ENCODE measurements at regions of chr15 and their contacts with region 1.

Region 1: DNA sequence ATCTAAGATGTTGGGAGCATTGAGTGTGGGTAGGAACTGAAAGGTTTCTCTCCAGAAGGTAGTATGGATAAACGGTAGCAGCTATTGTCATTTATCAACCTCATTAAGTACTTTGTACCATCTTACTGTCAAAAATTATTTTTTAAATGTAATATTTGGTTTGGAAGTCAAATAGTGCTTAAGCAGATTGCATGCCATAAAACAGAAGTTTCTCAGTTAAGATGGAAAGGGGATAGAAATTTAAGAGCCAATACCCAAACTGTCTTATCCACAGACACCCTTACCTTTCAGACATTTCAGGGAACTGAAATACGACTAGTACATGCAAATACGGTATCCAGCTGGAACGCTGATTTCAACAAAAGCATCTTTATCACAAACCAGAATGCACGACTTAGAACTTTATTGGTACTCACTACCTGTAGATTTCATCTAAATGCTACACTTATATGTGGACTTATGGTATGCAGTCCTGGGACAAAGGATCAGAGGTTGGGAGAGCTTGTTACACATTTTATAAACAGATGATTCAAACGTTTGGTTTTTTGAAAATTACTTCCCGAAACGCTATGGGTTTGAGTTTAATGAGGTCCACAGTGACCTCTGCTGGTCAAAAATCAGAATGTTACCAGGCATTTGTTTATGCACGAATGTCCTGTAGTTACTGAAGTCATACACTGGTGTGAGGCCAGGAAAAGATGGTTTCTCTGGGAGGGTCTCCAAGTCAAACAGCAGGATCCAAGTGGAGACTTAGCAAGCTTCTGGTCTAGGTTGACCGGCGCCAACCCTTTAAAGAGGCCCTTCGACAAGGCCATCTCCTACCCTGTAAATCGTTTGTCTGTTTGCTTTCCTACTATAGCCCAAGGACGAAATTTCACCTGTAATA is 45.7 kb upstream of the DUT start:
- DNase-seq: peak; percentile 90
- H3K4me3 ChIP-seq: peak overlapping the region in 1 of 3 experiments; percentile 55
- H3K27ac ChIP-seq: no peak overlapping the region
- H3K4me1 ChIP-seq: peaks cover 3% of the 10 kb centered on the region
- H3K27me3 ChIP-seq: peaks cover 4 to 8% of the 10 kb centered on the region in 2 experiments
- CTCF ChIP-seq: peak; percentile 41 to 70
- POLR2A ChIP-seq: no peak

Region 2: GRCh38 chr15:46312133-46312740 is 1973.3 kb before region 1 on chr15:
- CTCF ChIA-PET with region 1: interaction called, 3 read pairs
- POLR2A ChIA-PET with region 1: no interaction called
- dilution Hi-C with region 1: no loop called
- intact Hi-C with region 1: loop called (anchors 5 kb)
- DNase-seq: peak; percentile 71
- H3K4me3 ChIP-seq: no peak overlapping the region
- H3K27ac ChIP-seq: no peak overlapping the region
- H3K4me1 ChIP-seq: no peaks in the 10 kb centered on the region
- H3K27me3 ChIP-seq: peaks cover 0 to 3% of the 10 kb centered on the region in 2 experiments
- CTCF ChIP-seq: peak; percentile 82 to 86
- POLR2A ChIP-seq: no peak

Region 3: DNA sequence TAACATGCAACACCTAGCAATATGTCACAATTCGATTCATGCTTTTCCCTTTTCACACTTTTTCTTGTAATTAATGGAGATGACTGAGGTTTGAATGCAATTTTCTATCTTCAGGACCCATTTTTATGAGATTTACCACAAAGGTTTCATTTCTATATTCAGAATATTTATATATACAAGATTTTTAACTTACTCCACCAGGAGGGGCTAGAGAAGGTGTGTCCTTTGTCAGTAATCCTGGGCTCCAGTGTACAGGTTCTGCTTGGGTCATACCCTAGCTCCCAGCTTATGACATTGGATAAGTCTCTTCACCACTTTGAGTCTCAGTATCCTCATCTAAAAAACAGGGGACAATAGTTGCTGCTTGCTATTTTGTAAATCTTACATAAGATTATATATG is 260.5 kb before region 1 on chr15:
- CTCF ChIA-PET with region 1: interaction called, 10 read pairs
- POLR2A ChIA-PET with region 1: no interaction called
- dilution Hi-C with region 1: no loop called
- intact Hi-C with region 1: loop called (anchors 1 kb)
- DNase-seq: peak; percentile 2
- H3K4me3 ChIP-seq: no peak overlapping the region
- H3K27ac ChIP-seq: no peak overlapping the region
- H3K4me1 ChIP-seq: no peaks in the 10 kb centered on the region
- H3K27me3 ChIP-seq: peaks cover 0 to 4% of the 10 kb centered on the region in 2 experiments
- CTCF ChIP-seq: no peak
- POLR2A ChIP-seq: no peak

Region 4: GRCh38 chr15:48084759-48085590 is 200.6 kb before region 1 on chr15:
- CTCF ChIA-PET with region 1: interaction called, 16 read pairs
- POLR2A ChIA-PET with region 1: no interaction called
- dilution Hi-C with region 1: no loop called
- intact Hi-C with region 1: no loop called
- DNase-seq: peak; percentile 18
- H3K4me3 ChIP-seq: no peak overlapping the region
- H3K27ac ChIP-seq: no peak overlapping the region
- H3K4me1 ChIP-seq: no peaks in the 10 kb centered on the region
- H3K27me3 ChIP-seq: no peaks in the 10 kb centered on the region
- CTCF ChIP-seq: peak; percentile 29 to 47
- POLR2A ChIP-seq: no peak

Region 5: DNA sequence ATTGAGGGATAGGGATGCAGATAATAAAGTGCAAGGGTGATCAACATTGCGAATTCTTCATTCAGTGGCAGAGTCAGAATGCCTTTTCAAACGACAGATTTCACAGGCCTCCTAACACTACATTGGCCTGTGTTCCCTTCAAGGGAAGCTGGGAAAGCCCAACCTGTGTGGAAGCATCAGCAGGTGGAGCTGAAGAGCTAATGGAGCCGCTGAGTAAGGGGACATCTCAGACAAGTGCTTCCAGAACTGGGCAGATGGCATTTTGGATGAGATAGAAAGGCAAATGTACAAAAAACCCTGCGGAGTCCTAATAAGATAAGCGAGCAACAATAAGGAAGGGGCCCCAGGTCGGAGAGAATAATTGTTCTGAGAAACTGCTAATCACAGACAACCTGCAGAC is 173.3 kb before region 1 on chr15:
- CTCF ChIA-PET with region 1: interaction called, 45 read pairs
- POLR2A ChIA-PET with region 1: no interaction called
- dilution Hi-C with region 1: no loop called
- intact Hi-C with region 1: loop called (anchors 1 kb)
- DNase-seq: peak; percentile 49
- H3K4me3 ChIP-seq: no peak overlapping the region
- H3K27ac ChIP-seq: no peak overlapping the region
- H3K4me1 ChIP-seq: no peaks in the 10 kb centered on the region
- H3K27me3 ChIP-seq: peaks cover 2 to 3% of the 10 kb centered on the region in 2 experiments
- CTCF ChIP-seq: peak; percentile 27 to 60
- POLR2A ChIP-seq: no peak

Region 6: GRCh38 chr15:48267766-48268165 is 17.8 kb before region 1 on chr15:
- CTCF ChIA-PET with region 1: interaction called, 25 read pairs
- POLR2A ChIA-PET with region 1: no interaction called
- dilution Hi-C with region 1: no loop called
- intact Hi-C with region 1: no loop called
- DNase-seq: no peak
- H3K4me3 ChIP-seq: no peak overlapping the region
- H3K27ac ChIP-seq: no peak overlapping the region
- H3K4me1 ChIP-seq: no peaks in the 10 kb centered on the region
- H3K27me3 ChIP-seq: peaks cover 1 to 10% of the 10 kb centered on the region in 2 experiments
- CTCF ChIP-seq: no peak
- POLR2A ChIP-seq: no peak

Region 7: GRCh38 chr15:48297668-48298067 is 12.1 kb after region 1 on chr15:
- CTCF ChIA-PET with region 1: interaction called, 14 read pairs
- POLR2A ChIA-PET with region 1: no interaction called
- dilution Hi-C with region 1: no loop called
- intact Hi-C with region 1: no loop called
- DNase-seq: no peak
- H3K4me3 ChIP-seq: no peak overlapping the region
- H3K27ac ChIP-seq: no peak overlapping the region
- H3K4me1 ChIP-seq: no peaks in the 10 kb centered on the region
- H3K27me3 ChIP-seq: peaks cover 0 to 1% of the 10 kb centered on the region in 2 experiments
- CTCF ChIP-seq: no peak
- POLR2A ChIP-seq: no peak

Region 8: DNA sequence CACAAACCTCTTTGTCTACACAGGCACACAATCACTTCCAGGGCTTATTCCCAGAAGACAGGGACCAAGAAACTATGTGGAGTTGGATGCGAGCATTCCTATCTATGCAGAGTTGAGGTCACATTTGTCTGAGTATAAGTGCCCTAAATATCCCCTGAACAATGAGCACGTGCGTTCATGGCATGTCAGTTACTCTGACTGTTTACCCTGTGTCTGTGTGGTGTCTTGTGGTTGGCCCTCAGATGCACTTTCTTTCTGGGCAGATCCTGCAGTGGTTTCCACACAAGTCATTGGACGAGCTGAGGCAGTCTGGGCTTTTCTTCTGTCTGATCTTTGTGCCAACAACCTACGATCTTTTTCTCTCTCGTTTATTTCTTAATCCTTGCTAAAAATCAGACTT is 225.4 kb after region 1 on chr15:
- CTCF ChIA-PET with region 1: no interaction called
- POLR2A ChIA-PET with region 1: no interaction called
- dilution Hi-C with region 1: no loop called
- intact Hi-C with region 1: no loop called
- DNase-seq: no peak
- H3K4me3 ChIP-seq: no peak overlapping the region
- H3K27ac ChIP-seq: no peak overlapping the region
- H3K4me1 ChIP-seq: peaks cover 3% of the 10 kb centered on the region
- H3K27me3 ChIP-seq: no peaks in the 10 kb centered on the region
- CTCF ChIP-seq: no peak
- POLR2A ChIP-seq: no peak

Region 9: DNA sequence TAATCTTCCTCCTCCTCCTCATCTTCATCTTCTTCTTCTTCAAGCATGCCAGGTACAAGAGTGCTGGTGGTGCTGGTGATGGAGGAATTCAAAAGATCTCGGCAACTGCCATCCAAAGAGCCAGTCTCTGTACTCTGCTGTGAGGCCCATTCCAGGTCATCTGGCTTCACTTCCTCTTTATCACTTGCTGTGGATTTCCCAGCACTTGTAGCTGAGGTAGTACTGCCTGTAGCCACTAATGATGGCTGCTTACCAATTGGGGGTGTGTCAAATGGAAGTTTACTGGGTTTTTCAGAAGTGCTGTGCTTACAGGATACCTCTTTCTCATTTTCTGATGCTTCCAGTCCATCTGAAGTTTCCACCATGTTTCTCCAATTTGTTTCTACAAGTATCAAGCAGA is 707.0 kb after region 1 on chr15:
- CTCF ChIA-PET with region 1: no interaction called
- POLR2A ChIA-PET with region 1: no interaction called
- dilution Hi-C with region 1: no loop called
- intact Hi-C with region 1: no loop called
- DNase-seq: no peak
- H3K4me3 ChIP-seq: no peak overlapping the region
- H3K27ac ChIP-seq: no peak overlapping the region
- H3K4me1 ChIP-seq: no peaks in the 10 kb centered on the region
- H3K27me3 ChIP-seq: no peaks in the 10 kb centered on the region
- CTCF ChIP-seq: no peak
- POLR2A ChIP-seq: no peak

Measured in endothelial cell of umbilical vein (primary cell).